Caco-2 (cell line): ENCODE measurements at regions of chr5 and their contacts with region 1.

Region 1: DNA sequence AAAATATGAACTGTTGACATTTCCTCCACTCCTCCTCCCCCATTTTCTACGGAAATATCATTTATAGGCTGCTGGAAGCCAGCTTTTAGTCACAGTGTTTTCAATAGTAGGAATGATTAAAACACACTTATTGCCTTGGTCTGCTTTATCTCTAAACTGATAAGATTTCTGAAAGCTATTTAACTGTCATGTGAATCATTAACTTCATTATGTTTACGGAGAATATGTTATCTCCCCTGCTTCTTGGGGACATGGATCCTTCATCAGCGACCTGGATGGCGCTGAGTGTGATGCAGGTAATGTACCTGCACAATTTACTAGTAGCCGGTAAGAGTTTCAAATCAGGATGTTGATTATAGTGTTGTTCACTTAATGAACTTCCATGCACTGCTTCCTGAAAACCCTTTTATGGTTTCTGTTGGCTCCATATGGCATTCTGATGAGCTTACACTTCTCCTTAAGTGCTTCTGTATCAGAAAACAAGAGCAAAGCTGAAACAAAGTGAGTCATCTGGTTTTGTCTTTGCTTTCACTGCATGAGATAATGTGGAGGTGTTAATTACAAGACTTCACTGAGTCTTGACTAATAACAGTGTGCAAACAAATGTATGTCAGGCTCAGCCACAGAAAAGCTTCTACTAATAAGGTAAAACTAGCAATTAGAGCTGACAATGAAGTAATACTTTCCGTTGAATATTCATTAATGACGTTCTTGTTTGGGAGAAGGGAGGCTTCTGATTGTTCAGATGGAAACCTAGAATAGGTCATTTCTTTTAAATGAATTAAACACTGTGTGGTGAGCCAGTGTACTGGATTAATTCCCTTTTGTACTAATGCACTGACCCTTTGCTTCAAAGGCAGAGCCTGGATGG is 162.4 kb upstream of the ZNF608 start:
- DNase-seq: peak; percentile 52 to 67
- H3K4me3 ChIP-seq: no peak overlapping the region
- H3K4me3 Mint-ChIP-seq: peak overlapping the region; percentile 40
- H3K27ac Mint-ChIP-seq: peak overlapping the region; percentile 60
- H3K4me1 ChIP-seq: peaks cover 49% of the 10 kb centered on the region
- H3K4me1 Mint-ChIP-seq: peaks cover 31% of the 10 kb centered on the region
- H3K27me3 ChIP-seq: no peaks in the 10 kb centered on the region
- H3K27me3 Mint-ChIP-seq: no peaks in the 10 kb centered on the region
- CTCF ChIP-seq: no peak

Region 2: GRCh38 chr5:124661317-124662141 is 247.3 kb before region 1 on chr5:
- CTCF ChIA-PET with region 1: no interaction called
- POLR2A ChIA-PET with region 1: no interaction called
- intact Hi-C with region 1: loop called (anchors 1 kb)
- DNase-seq: peak; percentile 86 to 91
- H3K4me3 ChIP-seq: no peak overlapping the region
- H3K4me3 Mint-ChIP-seq: peak overlapping the region; percentile 65
- H3K27ac Mint-ChIP-seq: peak overlapping the region; percentile 96
- H3K4me1 ChIP-seq: peaks cover 76% of the 10 kb centered on the region
- H3K4me1 Mint-ChIP-seq: peaks cover 19% of the 10 kb centered on the region
- H3K27me3 ChIP-seq: no peaks in the 10 kb centered on the region
- H3K27me3 Mint-ChIP-seq: no peaks in the 10 kb centered on the region
- CTCF ChIP-seq: no peak

Region 3: GRCh38 chr5:124888050-124888506 is 20.7 kb before region 1 on chr5:
- CTCF ChIA-PET with region 1: interaction called, 5 read pairs
- POLR2A ChIA-PET with region 1: no interaction called
- intact Hi-C with region 1: loop called (anchors 1 kb)
- DNase-seq: peak; percentile 65 to 75
- H3K4me3 ChIP-seq: no peak overlapping the region
- H3K4me3 Mint-ChIP-seq: peak overlapping the region; percentile 66
- H3K27ac Mint-ChIP-seq: peak overlapping the region; percentile 75
- H3K4me1 ChIP-seq: peaks cover 23% of the 10 kb centered on the region
- H3K4me1 Mint-ChIP-seq: peaks cover 9% of the 10 kb centered on the region
- H3K27me3 ChIP-seq: no peaks in the 10 kb centered on the region
- H3K27me3 Mint-ChIP-seq: no peaks in the 10 kb centered on the region
- CTCF ChIP-seq: peak; percentile 35 to 69

Region 4: DNA sequence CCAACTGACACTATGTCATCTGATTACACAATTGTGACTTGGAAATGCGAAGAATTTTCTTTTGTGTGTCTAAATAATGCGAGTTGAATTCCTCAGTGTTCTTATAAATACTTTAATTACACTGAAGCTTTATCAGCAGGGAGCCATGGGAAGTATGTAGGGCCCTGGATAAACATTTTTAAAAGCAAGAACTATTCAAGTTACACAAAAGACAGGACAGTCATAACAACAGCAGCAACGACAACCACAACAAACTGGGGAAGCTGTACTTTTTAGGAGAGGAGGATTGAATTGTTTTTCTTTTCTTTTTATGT is 87.9 kb after region 1 on chr5:
- CTCF ChIA-PET with region 1: no interaction called
- POLR2A ChIA-PET with region 1: no interaction called
- intact Hi-C with region 1: loop called (anchors 1 kb)
- DNase-seq: peak in 1 of 2 experiments; percentile 59
- H3K4me3 ChIP-seq: no peak overlapping the region
- H3K4me3 Mint-ChIP-seq: peak overlapping the region; percentile 52
- H3K27ac Mint-ChIP-seq: peak overlapping the region; percentile 93
- H3K4me1 ChIP-seq: peaks cover 49% of the 10 kb centered on the region
- H3K4me1 Mint-ChIP-seq: peaks cover 39% of the 10 kb centered on the region
- H3K27me3 ChIP-seq: no peaks in the 10 kb centered on the region; the same call in 1 of the 2 replicates
- H3K27me3 Mint-ChIP-seq: no peaks in the 10 kb centered on the region
- CTCF ChIP-seq: no peak

Region 5: GRCh38 chr5:125026896-125027732 is 118.3 kb after region 1 on chr5:
- CTCF ChIA-PET with region 1: no interaction called
- POLR2A ChIA-PET with region 1: no interaction called
- intact Hi-C with region 1: loop called (anchors 1 kb)
- DNase-seq: peak; percentile 70 to 84
- H3K4me3 ChIP-seq: no peak overlapping the region
- H3K4me3 Mint-ChIP-seq: peak overlapping the region; percentile 6
- H3K27ac Mint-ChIP-seq: peak overlapping the region; percentile 59
- H3K4me1 ChIP-seq: peaks cover 26% of the 10 kb centered on the region
- H3K4me1 Mint-ChIP-seq: peaks cover 46% of the 10 kb centered on the region
- H3K27me3 ChIP-seq: no peaks in the 10 kb centered on the region
- H3K27me3 Mint-ChIP-seq: no peaks in the 10 kb centered on the region
- CTCF ChIP-seq: no peak

Region 6: DNA sequence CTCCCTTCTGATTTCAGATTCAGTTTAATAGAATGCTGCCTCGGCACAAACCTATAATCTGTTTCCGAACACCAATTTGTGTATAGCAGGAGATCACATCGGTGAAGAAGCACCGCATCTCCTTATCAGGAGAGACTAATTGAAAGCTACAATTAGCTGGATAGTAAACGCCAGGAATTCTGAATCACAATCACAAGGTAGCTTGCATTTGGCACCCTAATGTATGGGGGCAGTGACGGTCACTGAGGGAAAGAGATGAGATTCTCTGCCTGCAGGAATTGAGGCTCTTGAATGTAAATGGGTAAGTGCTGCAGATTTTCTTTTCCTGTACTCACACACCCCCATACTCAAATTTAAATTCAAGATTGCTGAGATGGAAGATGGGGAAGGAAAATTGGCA is 211.2 kb after region 1 on chr5:
- CTCF ChIA-PET with region 1: no interaction called
- POLR2A ChIA-PET with region 1: no interaction called
- intact Hi-C with region 1: no loop called
- DNase-seq: no peak
- H3K4me3 ChIP-seq: no peak overlapping the region
- H3K4me3 Mint-ChIP-seq: no peak overlapping the region
- H3K27ac Mint-ChIP-seq: no peak overlapping the region
- H3K4me1 ChIP-seq: 0 out of 2 replicates have a peak, but pooled peaks cover under 1% of the 10 kb centered on the region
- H3K4me1 Mint-ChIP-seq: peaks cover 6% of the 10 kb centered on the region
- H3K27me3 ChIP-seq: no peaks in the 10 kb centered on the region
- H3K27me3 Mint-ChIP-seq: no peaks in the 10 kb centered on the region
- CTCF ChIP-seq: no peak

Region 7: DNA sequence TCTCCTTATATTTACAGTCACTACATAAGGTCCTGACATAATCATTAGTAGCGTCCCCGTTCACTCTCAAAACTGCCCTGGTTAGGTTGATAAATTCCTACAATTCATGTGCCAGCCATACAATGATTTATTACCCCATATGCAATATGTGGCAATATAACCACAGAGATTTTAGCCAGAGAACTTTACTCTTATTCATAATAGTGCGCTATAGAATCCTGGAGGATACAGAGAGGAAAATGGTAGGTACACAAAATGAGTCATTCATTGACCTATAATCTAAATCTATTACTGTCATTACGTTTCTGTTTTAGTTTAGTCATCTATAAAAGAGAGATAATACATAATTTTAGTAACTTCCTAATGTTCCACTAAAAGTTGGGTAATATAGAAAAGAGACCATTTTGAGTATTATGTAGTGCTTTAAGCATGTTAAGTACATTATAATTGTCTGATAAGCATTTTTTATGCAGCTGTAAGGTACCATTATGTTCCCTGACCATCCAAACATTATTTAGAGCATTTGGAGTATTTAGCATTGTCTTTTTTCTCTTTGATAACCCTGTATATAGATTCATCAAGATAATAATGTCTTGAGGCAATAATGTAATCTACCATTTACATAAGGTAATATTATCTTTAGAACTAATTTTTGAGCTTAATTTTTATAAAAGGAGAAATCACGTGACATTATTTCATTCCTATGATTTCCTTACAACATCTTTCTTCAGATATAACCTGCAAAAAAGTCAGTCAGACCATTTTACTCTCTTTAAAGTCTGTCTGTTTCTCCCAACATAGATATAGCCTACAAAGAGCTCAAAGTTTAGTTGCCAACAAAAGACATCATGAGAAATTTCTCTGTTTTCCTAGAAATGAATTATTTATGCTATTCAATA is 493.2 kb after region 1 on chr5:
- CTCF ChIA-PET with region 1: no interaction called
- POLR2A ChIA-PET with region 1: no interaction called
- intact Hi-C with region 1: loop called (anchors 2 kb)
- DNase-seq: no peak
- H3K4me3 ChIP-seq: no peak overlapping the region
- H3K4me3 Mint-ChIP-seq: peak overlapping the region; percentile 55
- H3K27ac Mint-ChIP-seq: no peak overlapping the region
- H3K4me1 ChIP-seq: peaks cover 27% of the 10 kb centered on the region
- H3K4me1 Mint-ChIP-seq: peaks cover 26% of the 10 kb centered on the region
- H3K27me3 ChIP-seq: no peaks in the 10 kb centered on the region
- H3K27me3 Mint-ChIP-seq: no peaks in the 10 kb centered on the region
- CTCF ChIP-seq: no peak